ENCODE measurements at regions of chr3 and their contacts with region 1.

Region 1: GRCh38 chr3:85567071-85567676 is 608.4 kb downstream of the CADM2 start:
- ATAC-seq: peak in 3 of 8 experiments; percentile 29 to 73 (median 43)
- H3K4me3 ChIP-seq: no peak overlapping the region
- H3K27ac ChIP-seq: no peak overlapping the region
- H3K4me1 ChIP-seq: no peaks in the 10 kb centered on the region

Region 2: GRCh38 chr3:84567796-84568195 is 999.4 kb before region 1 on chr3:
- in situ Hi-C with region 1: loop called in 1 of 9 experiments (anchors 25 kb)
- ATAC-seq: no peak
- H3K4me3 ChIP-seq: no peak overlapping the region
- H3K27ac ChIP-seq: no peak overlapping the region
- H3K4me1 ChIP-seq: no peaks in the 10 kb centered on the region